HEK293 (cell line): ENCODE measurements at regions of chr4 and their contacts with region 1.

Region 1: GRCh38 chr4:88021824-88022223 is 14.4 kb downstream of the PKD2 start:
- H3K4me3 ChIP-seq: no peak overlapping the region
- H3K27ac ChIP-seq: no peak overlapping the region
- H3K4me1 ChIP-seq: no peaks in the 10 kb centered on the region
- CTCF ChIP-seq: no peak

Region 2: GRCh38 chr4:88033309-88033708 is 11.5 kb after region 1 on chr4:
- CTCF ChIA-PET with region 1: interaction called, 13 read pairs
- POLR2A ChIA-PET with region 1: no interaction called
- H3K4me3 ChIP-seq: no peak overlapping the region
- H3K27ac ChIP-seq: no peak overlapping the region
- H3K4me1 ChIP-seq: no peaks in the 10 kb centered on the region
- CTCF ChIP-seq: peak; percentile 47; the same call in 1 of the 2 replicates